ENCODE measurements at regions of chr7 and their contacts with region 1.

Region 1: DNA sequence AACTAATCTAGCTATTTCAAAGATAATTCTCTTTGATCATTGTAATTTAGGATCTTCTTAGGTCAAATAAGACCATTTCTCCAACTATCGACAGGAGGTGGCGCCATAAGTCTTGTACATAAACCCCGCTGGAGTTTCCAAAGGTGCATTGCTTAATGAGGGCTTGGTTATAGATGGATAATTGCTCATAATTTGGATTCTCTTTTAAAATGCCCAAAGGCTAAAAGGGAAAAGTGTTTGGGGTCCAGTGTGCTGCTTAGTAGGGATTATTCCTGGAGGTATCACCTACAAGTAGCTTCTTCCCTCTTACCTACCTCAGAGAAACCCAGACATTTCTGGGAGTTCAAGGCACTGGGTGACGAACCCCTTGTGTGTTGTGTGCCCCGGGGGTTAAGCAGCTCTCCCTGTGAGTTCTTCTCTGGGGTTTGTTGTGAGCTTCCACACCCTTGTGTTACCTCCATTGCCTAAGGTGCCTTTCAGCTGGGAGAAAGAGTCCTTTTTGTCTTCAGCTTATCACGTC is 75.2 kb downstream of the PAXIP1 start:
- DNase-seq: peak; percentile 83
- H3K4me3 Mint-ChIP-seq: peak overlapping the region; percentile 95
- H3K27ac Mint-ChIP-seq: peak overlapping the region; percentile 94
- H3K4me1 Mint-ChIP-seq: peaks cover 24% of the 10 kb centered on the region
- H3K27me3 Mint-ChIP-seq: no peaks in the 10 kb centered on the region

Region 2: DNA sequence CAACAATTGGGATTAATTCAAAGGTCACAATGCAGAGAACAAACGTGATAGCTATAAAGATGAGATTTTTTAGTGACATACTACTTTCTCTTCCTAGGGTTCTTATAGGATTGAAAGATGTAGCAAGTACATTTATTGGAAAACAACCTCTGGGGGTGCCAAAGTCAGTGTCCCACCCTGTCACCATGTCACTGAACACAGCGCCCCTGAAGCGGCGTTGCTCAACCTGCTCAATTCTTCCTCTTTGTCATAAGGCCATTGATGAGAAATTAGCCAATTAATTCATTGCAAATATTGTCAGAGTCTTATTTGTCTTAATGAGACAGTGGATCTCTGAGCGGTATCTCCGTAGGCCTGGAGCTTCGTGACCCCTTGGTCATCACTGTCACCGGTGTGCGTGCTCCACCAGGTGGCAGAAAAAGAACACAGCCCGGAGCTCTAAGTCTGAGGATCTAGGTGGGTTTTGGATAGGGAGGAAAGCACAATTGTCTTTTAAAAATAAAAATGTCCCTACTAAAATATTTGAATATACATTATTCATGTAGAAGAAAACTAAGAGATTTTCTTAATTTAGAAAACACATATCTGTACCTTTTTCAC is 287.3 kb before region 1 on chr7:
- CTCF ChIA-PET with region 1: no interaction called
- POLR2A ChIA-PET with region 1: no interaction called
- intact Hi-C with region 1: no loop called
- DNase-seq: no peak
- H3K4me3 Mint-ChIP-seq: no peak overlapping the region
- H3K27ac Mint-ChIP-seq: no peak overlapping the region
- H3K4me1 Mint-ChIP-seq: no peaks in the 10 kb centered on the region
- H3K27me3 Mint-ChIP-seq: no peaks in the 10 kb centered on the region

Region 3: GRCh38 chr7:154903083-154903731 is 24.5 kb before region 1 on chr7:
- CTCF ChIA-PET with region 1: no interaction called
- POLR2A ChIA-PET with region 1: no interaction called
- intact Hi-C with region 1: no loop called
- DNase-seq: no peak
- H3K4me3 Mint-ChIP-seq: no peak overlapping the region
- H3K27ac Mint-ChIP-seq: no peak overlapping the region
- H3K4me1 Mint-ChIP-seq: no peaks in the 10 kb centered on the region
- H3K27me3 Mint-ChIP-seq: peaks cover 5% of the 10 kb centered on the region

Region 4: DNA sequence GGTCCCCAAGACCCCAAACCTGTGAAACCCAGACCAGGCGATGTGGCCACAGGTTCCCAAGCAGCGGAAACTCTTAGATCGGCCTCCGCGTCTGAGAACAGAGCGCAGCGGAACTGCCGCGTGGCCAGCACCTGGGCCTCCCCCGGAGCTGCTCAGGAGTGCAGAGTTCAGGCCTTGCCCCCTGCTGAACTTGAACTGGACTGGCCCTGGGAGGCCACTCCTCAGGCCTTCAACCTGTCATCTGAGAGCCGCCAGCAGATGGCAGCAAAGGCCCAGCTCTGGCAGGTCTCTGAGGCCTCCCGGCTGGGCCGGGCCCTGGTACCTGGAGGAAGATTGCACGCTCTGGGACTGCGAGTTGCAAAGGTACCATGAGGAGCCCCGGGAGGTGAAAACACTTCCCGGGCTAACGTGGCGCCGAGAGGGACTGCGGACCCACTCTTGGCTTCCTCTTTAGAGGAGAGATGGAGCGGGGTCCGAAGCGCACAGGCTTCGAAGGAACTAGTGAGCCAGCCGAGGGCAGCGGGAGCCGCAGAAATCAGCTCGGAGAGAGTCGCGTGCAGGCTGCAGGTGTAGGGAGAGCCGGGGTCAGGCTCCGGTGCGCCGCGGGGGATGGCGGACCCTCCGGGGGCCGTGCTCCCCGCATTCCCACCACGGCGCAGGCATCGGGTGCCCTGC is 13.9 kb before region 1 on chr7:
- CTCF ChIA-PET with region 1: interaction called, 54 read pairs
- POLR2A ChIA-PET with region 1: no interaction called
- intact Hi-C with region 1: no loop called
- DNase-seq: peak; percentile 90
- H3K4me3 Mint-ChIP-seq: peak overlapping the region; percentile 59
- H3K27ac Mint-ChIP-seq: no peak overlapping the region
- H3K4me1 Mint-ChIP-seq: peaks cover 4% of the 10 kb centered on the region
- H3K27me3 Mint-ChIP-seq: peaks cover 28% of the 10 kb centered on the region

Region 5: DNA sequence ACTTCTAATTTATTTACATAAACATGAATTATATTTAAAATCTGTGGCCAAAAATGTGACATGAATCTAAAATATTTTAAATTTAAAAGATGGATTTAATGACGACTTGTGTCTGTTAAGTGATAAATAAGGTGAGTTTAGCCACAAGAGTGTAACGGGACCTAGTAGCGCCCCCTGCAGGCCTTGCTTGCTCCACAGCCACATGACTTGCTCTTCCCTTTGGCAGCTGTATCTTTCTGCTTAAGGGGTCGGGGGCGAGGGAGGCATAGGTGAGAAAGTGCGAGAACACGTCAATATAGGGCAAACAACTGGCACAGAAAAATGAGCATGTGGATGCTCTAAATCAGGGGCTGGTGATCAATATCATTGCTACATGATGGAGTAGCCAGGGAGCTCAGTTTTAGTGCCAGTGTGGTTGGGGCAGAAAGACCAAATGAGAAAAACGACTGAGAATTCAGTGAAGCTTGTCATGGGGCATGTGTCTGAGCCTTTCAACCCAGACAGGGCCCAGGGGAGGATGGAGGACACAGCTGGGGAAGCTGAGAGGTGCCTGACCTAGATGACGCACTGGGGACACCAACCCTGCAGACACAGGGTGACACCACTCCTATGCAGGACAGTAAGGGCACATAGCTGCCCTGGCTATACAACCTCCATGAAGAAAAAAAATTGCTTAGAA is 25.5 kb after region 1 on chr7:
- CTCF ChIA-PET with region 1: interaction called, 70 read pairs
- POLR2A ChIA-PET with region 1: no interaction called
- intact Hi-C with region 1: loop called (anchors 1 kb)
- DNase-seq: peak; percentile 78
- H3K4me3 Mint-ChIP-seq: no peak overlapping the region
- H3K27ac Mint-ChIP-seq: no peak overlapping the region
- H3K4me1 Mint-ChIP-seq: no peaks in the 10 kb centered on the region
- H3K27me3 Mint-ChIP-seq: no peaks in the 10 kb centered on the region

Region 6: GRCh38 chr7:155190688-155191087 is 263.0 kb after region 1 on chr7:
- CTCF ChIA-PET with region 1: interaction called, 6 read pairs
- POLR2A ChIA-PET with region 1: no interaction called
- intact Hi-C with region 1: loop called (anchors 2 kb)
- DNase-seq: peak; percentile 76
- H3K4me3 Mint-ChIP-seq: no peak overlapping the region
- H3K27ac Mint-ChIP-seq: no peak overlapping the region
- H3K4me1 Mint-ChIP-seq: peaks cover 28% of the 10 kb centered on the region
- H3K27me3 Mint-ChIP-seq: peaks cover 4% of the 10 kb centered on the region

Region 7: DNA sequence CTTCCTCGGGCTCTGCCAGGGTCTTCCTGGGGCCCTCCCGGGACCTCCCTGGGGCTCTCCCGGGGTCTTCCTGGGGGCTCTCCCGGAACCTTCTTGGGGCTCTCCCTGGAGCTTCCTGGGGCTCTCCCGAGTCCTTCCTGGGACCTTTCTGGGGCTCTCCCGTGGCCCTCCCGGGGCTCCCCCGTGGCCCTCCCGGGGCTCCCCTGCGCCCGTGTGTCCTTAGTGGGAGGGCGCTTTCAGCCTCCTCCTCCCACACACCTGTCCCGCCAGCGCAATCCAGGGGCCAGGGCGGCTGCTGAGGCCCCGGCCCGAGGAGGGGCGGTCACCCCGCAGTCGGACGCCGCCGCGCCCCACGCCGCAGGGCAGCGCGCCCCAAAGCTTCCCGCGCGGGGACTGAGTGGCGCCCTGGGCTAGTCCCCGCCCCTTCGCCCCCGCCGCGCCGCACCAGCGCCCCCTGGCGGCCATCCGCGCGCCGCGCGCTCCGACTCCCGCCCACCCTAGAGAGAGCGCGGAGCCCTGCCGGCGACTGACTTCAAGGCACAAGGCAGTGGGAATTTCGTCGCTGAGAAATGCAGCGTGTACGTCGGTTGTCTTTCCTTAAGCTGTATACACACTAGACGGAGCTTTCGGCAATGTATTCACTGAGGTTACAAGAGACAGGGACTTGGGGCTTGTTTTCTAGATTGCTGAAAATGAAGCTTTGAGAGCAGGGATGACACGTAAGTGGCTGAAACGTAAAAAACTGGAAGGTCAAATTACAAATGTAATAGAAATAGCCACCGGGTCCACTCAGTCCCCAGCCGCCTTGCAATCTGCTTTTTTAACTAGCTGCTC is 417.1 kb after region 1 on chr7:
- CTCF ChIA-PET with region 1: interaction called, 56 read pairs
- POLR2A ChIA-PET with region 1: no interaction called
- intact Hi-C with region 1: loop called (anchors 1 kb)
- DNase-seq: peak; percentile 85
- H3K4me3 Mint-ChIP-seq: peak overlapping the region; percentile 45
- H3K27ac Mint-ChIP-seq: no peak overlapping the region
- H3K4me1 Mint-ChIP-seq: peaks cover 7% of the 10 kb centered on the region
- H3K27me3 Mint-ChIP-seq: peaks cover 15% of the 10 kb centered on the region

Region 8: DNA sequence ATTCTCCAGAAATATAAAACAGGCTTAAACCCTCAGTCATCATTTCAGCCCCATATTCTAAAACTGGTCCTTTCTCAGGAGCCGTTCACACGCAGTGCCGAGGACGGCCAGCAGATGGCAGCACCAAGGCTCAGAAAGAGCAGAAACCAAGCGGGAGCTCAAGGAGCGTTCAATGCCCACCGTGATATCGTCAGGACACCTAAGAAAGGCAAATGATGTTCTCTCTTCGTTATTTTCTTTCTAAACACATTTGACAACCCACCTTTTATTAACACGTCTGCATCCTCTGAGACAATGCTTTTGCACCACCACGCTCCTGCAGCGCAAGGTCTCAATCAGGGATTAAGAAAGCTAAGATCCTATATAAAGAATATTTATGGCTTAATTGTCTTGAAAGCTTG is 671.1 kb after region 1 on chr7:
- CTCF ChIA-PET with region 1: interaction called, 13 read pairs
- POLR2A ChIA-PET with region 1: no interaction called
- intact Hi-C with region 1: no loop called
- DNase-seq: peak; percentile 88
- H3K4me3 Mint-ChIP-seq: no peak overlapping the region
- H3K27ac Mint-ChIP-seq: no peak overlapping the region
- H3K4me1 Mint-ChIP-seq: peaks cover 12% of the 10 kb centered on the region
- H3K27me3 Mint-ChIP-seq: peaks cover 21% of the 10 kb centered on the region